K562 (cell line): ENCODE measurements at regions of chr9 and their contacts with region 1.

Region 1: GRCh38 chr9:6757456-6758247 is at the start of gene KDM4C:
- DNase-seq: peak; percentile 92 to 96 (median 94)
- ATAC-seq: peak; percentile 87
- H3K4me3 ChIP-seq: peak within 1 kb of the TSS; percentile 84
- H3K27ac ChIP-seq: peak within 1 kb of the TSS; percentile 91
- H3K4me1 ChIP-seq: peaks cover 0 to 15% of the 10 kb centered on the region in 2 experiments; a peak in 3 of 5 replicates
- H3K27me3 ChIP-seq: no peaks in the 10 kb centered on the region
- CTCF ChIP-seq: no peak
- EP300 ChIP-seq: no peak
- POLR2A ChIP-seq: peak; percentile 88
- RAD21 ChIP-seq: no peak
- polyA plus RNA-seq, gene KDM4C: 5.4 to 5.9 TPM

Region 2: DNA sequence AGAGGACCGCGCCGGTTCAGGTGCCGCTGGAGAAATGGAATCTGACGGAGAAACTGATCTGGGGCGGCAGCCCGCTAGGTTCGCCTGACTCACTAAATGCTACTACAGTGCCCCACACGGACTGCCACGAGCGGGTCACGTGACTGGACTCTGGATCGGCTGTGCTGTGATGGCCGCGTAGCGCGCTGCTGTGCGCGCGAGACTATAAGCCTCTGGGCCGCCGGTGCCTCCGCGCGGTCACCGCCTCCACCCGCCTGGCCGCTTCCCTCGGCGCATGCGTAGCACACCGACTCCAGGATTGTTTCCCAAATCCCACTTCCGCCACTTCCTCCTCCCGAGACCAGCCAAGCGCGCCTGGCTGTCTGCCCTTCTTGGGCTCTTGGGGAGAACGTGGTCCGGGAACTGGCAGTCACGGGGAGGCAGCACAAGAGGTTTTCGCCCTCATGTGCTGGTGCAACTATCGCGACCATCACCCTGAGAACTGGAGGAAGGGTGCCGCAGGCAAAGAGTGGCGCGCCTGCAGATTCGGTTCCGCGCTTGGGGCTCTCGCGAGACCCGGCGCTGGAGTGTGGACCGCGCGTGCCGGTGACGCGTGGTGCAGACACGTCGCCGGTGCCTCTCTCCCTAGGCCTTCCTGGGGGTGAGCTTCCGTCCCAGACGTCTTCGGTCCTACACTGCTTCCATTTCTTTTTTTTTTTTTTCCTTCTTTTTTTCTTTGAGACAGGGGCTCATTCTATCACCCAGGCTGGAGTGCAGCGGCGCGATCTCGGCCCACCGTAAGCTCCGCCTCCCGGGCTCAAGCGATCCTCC is 76.3 kb before region 1 on chr9:
- CTCF ChIA-PET with region 1: no interaction called
- POLR2A ChIA-PET with region 1: interaction called, 4 read pairs
- in situ Hi-C with region 1: no loop called
- intact Hi-C with region 1: loop called (anchors 5 kb)
- DNase-seq: peak; percentile 89 to 95 (median 92)
- ATAC-seq: peak; percentile 94
- H3K4me3 ChIP-seq: peak overlapping the region; percentile 63
- H3K27ac ChIP-seq: peak overlapping the region; percentile 94
- H3K4me1 ChIP-seq: peaks cover 6 to 11% of the 10 kb centered on the region in 2 experiments; a peak in 4 of 5 replicates
- H3K27me3 ChIP-seq: no peaks in the 10 kb centered on the region
- CTCF ChIP-seq: no peak
- EP300 ChIP-seq: peak; percentile 31; the same call in 1 of the 2 replicates
- POLR2A ChIP-seq: peak; percentile 94
- RAD21 ChIP-seq: no peak